Mammary epithelial cell (primary cell): ENCODE measurements at regions of chr1 and their contacts with region 1.

Region 1: DNA sequence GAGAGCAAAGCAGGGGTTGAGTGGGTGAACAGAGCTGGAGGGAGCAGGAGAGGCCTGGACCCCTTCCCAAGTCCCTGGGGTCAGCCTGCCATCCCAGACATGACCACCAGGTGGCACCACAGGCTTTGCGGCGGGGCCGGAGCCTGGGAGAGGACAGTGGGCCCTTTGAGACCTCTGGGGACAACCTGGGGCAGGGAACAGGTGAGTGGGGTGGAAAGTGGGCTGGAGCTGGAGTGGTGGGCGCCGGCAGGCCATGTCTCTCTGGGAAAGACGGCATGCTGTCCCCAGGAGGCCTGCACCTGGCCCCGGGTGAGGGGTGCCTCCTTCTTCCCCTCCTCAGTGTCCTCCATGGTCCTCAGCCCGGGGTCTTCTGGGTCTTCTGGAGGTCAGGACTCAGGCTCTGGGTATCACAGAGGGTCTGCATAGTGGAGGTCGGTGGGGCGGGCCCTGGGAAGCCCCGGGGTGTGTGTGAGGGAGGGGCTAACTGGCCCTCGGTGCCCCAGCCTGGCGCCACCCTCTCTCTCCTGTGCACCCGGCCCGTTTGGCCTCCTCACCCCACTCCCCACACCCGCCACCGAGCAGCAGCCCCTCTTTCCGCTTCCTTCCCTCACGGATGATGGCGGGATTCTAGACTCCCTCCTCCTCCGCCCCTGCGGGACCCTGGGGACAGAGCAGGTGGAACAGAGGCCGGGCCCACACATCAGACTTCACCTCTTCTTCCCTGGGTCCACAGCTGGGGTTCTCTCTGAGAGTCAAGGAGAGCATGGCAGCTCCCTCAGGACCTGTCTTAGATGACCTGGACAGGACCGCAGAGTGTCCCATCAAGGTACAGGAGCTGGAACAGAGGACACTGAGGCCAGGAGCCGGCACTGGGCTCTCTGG is 28.4 kb upstream of the PKP1 start:
- DNase-seq: peak; percentile 34
- H3K4me3 ChIP-seq: no peak overlapping the region
- H3K27ac ChIP-seq: no peak overlapping the region
- H3K4me1 ChIP-seq: peaks cover 11% of the 10 kb centered on the region
- H3K27me3 ChIP-seq: no peaks in the 10 kb centered on the region
- CTCF ChIP-seq: peak; percentile 89 to 99

Region 2: GRCh38 chr1:201206176-201206575 is 48.7 kb before region 1 on chr1:
- CTCF ChIA-PET with region 1: no interaction called
- dilution Hi-C with region 1: no loop called
- in situ Hi-C with region 1: no loop called
- intact Hi-C with region 1: no loop called
- DNase-seq: no peak
- H3K4me3 ChIP-seq: no peak overlapping the region
- H3K27ac ChIP-seq: no peak overlapping the region
- H3K4me1 ChIP-seq: no peaks in the 10 kb centered on the region
- H3K27me3 ChIP-seq: peaks cover 4% of the 10 kb centered on the region
- CTCF ChIP-seq: no peak

Region 3: DNA sequence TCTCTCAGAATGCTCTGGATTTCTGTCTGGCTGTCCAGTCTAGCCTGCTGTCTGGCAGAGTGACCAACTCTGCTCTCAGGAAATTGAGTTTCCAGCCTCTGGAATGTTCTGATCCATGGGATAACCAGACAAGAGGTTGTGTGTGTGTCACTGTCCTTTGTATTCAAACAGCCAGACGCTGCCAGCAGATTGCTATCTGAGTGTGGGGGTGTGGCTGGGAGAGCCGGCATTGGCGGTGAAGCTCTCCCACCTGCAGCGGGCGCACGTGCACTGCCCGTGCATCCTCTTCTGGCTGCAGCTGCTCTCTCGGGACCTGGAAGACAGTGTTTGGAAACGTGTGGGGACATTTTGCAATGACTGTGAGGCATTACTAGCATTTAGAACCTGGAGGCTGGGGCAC is 54.6 kb after region 1 on chr1:
- CTCF ChIA-PET with region 1: interaction called, 3 read pairs
- dilution Hi-C with region 1: no loop called
- in situ Hi-C with region 1: no loop called
- intact Hi-C with region 1: loop called (anchors 1 kb)
- DNase-seq: peak; percentile 94
- H3K4me3 ChIP-seq: no peak overlapping the region
- H3K27ac ChIP-seq: peak overlapping the region; percentile 98
- H3K4me1 ChIP-seq: peaks cover 64% of the 10 kb centered on the region
- H3K27me3 ChIP-seq: no peaks in the 10 kb centered on the region
- CTCF ChIP-seq: peak in 1 of 2 donors; percentile 30

Region 4: GRCh38 chr1:201408176-201408833 is 153.4 kb after region 1 on chr1:
- CTCF ChIA-PET with region 1: no interaction called
- dilution Hi-C with region 1: no loop called
- in situ Hi-C with region 1: no loop called
- intact Hi-C with region 1: loop called (anchors 2 kb)
- DNase-seq: peak; percentile 63
- H3K4me3 ChIP-seq: no peak overlapping the region
- H3K27ac ChIP-seq: no peak overlapping the region
- H3K4me1 ChIP-seq: no peaks in the 10 kb centered on the region
- H3K27me3 ChIP-seq: no peaks in the 10 kb centered on the region
- CTCF ChIP-seq: peak; percentile 96 to 98